HEK293T (cell line): ENCODE measurements at regions of chr19 and their contacts with region 1.

Region 1: DNA sequence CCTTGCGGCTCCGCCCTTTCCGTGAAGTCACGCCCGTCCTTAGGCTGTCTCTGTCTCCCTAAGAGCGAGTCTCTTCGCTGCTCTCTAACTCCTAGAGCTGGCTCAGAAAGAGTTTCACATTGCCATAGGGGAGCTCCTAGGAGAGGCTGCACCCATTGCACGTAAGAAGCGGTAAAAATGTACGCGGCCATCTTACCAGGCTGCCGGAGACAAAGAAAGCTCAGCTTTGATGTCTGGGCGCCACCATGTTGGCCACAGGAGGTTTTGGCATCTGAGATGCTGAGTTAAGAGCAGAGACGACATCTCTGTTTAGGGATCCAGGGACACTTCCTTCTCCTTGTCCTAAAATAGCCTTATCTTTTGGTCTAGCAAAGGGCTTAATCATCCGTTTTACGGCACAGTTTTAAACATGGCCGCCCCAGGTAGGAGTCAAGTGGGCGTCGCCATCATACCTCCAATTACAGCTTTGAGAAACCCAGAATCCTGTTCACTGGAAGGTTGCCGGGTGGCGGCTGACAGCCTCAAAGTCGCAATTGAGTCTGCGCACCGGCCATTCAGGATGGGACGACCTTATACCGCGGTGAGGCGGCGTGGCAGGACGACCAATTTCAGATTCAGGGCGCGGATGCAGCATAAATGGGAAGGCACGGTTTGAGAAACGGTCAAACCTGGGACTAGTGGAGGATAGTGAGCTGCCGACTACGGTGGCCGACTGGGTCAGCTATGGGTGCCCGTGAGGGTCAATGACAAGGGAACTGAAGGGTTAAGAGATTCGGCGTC is at the start of gene ZNF793:
- DNase-seq: peak; percentile 37

Region 2: DNA sequence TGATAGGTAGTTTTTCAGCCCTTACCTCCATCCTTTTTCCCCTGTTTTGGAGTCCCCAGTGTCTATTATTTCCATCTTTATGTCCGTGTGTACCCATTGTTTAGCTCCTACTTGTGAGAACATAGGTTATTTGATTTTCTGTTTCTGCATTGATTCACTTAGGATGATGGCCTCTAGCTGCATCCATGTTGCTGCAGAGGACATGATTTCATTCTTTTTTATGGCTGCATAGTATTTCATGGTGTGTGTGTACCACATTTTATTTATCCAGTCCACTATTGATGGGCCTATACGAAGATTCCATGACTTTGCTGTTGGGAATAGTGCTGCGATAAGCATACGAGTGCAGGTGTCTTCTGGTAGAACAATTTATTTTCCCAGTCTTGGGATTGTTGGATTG is 150.7 kb before region 1 on chr19:
- CTCF ChIA-PET with region 1: no interaction called
- POLR2A ChIA-PET with region 1: no interaction called
- DNase-seq: no peak

Region 3: DNA sequence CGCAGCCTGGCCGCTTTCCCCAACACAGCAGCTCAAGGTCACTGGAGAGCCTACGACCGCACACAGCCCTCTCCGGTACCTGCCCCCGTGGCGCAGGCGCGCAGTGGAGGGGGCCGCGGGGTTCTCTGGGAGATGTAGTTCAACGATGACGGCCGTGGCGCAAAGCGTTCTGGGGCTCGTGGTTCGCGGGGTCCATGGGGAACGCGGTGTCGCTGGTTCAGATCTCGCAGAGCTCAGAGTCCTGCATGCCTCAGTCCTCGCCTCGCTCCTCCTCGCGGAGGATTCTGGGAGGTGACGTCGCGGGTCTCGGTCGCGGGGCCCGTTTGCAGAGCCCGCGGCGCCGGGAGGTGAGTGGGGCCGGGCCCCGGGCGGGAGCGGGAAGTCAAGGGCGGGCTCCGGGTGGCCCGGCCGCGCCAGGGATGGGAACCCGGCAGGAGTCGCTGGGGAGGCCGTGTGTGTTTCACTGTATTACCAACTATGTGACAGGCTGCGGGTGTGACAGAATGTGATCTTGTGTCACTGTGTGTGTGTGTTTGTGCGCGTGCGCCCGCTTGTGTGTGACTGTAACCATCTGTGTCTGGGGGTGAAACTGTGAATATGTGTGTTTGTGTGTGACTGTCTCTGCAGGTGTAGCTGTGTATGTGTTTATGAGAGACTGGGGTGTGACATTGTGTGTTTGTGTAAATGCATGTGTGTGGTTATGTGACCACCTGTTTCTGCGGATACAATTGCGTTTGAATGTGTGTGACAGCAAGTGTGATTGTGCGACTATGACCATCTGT is 135.5 kb before region 1 on chr19 and contains the start of gene ZNF527:
- CTCF ChIA-PET with region 1: no interaction called
- POLR2A ChIA-PET with region 1: interaction called, 10 read pairs
- DNase-seq: peak; percentile 90

Region 4: GRCh38 chr19:37466798-37467607 is 39.6 kb before region 1 on chr19 and contains the start of gene ZNF569:
- CTCF ChIA-PET with region 1: no interaction called
- POLR2A ChIA-PET with region 1: interaction called, 10 read pairs
- DNase-seq: peak; percentile 75